ENCODE measurements at regions of chr16 and their contacts with region 1.

Region 1: DNA sequence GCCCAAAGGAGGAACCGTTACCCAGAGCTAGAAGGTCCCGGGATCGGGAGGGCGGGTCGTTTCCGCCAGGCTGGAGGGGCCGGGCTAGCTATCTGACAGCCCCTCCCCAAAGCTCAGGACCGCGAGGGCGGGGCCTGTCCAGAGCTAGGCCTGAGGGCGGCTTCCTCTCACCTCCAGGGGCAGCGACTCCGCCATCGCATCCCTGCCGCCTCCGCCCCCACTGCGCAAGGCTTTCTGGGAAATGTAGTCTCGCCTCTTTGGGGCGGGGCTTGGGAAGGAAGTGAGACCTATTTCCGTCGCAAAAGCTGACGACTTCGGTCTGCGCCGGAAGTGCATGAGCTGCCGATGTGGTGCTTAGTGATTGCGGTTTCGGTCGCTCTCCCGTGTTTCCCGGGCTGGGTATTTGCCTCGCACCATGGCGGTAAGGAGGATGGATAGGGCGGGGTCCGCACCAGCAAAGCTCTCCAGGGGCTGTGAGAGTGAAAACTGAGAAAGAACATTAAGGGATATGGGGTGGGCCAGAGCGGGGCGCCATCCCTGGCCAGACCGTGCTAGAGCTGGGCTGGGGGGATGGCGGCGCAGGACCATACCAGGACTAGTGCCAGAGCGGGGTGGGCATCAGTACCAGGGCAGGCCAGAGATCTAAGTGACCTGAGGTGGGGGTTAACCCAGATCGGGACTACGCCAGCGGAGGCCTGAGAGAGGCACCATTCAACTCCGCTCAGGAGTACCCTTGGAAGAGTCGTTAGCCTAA is at the start of gene TMEM208:
- DNase-seq: peak; percentile 92
- H3K4me3 ChIP-seq: peak within 1 kb of the TSS; percentile 98
- H3K27me3 ChIP-seq: no peaks in the 10 kb centered on the region
- CTCF ChIP-seq: peak; percentile 17; the same call in 1 of the 2 replicates
- polyA plus RNA-seq, gene TMEM208: 64.2 and 79.7 TPM in 2 replicates

Region 2: GRCh38 chr16:67210069-67210937 is 16.7 kb before region 1 on chr16:
- CTCF ChIA-PET with region 1: no interaction called
- POLR2A ChIA-PET with region 1: no interaction called
- DNase-seq: no peak
- H3K4me3 ChIP-seq: no peak overlapping the region
- H3K27me3 ChIP-seq: no peaks in the 10 kb centered on the region
- CTCF ChIP-seq: no peak

Region 3: GRCh38 chr16:67237396-67238277 is 10.7 kb after region 1 on chr16:
- CTCF ChIA-PET with region 1: interaction called, 15 read pairs
- POLR2A ChIA-PET with region 1: interaction called, 4 read pairs
- DNase-seq: no peak
- H3K4me3 ChIP-seq: no peak overlapping the region
- H3K27me3 ChIP-seq: no peaks in the 10 kb centered on the region
- CTCF ChIP-seq: no peak

Region 4: DNA sequence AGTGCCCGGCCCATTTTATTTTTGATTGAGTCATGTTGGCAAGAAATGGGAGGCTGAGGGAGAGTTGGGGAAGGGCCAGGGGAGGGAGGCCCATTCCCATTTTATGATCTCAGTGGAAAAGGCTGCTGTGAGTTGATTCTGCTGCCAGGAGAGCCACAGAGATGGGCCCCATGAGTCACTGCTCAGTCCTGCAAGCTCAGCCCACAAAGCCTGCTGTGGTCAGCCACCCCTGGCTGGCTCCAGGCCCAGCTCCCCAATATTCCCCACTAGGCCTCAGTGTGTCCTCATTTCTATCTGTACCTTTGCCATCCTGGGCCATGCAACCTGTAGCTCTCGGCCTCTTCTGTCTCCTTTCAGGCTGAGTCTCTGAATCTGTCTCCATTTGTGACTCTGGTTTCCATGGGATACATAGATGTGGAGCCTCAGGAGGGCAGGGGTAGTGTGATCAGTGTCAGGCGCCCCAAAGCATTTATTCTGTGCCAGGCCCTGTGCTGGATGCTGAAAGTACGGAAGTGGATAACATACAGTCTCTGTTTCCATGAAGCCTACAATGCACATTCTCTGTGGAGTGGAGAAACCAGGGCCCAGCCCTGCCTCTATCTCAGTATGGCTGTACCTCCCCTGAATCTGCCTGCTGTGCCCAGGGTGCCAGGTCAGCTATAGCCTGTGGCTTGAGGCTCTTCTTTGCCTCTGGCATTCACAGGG is 50.5 kb after region 1 on chr16:
- CTCF ChIA-PET with region 1: no interaction called
- POLR2A ChIA-PET with region 1: no interaction called
- DNase-seq: peak; percentile 95
- H3K4me3 ChIP-seq: no peak overlapping the region
- H3K27me3 ChIP-seq: no peaks in the 10 kb centered on the region
- CTCF ChIP-seq: no peak